ENCODE measurements at regions of chr17 and their contacts with region 1.

Region 1: DNA sequence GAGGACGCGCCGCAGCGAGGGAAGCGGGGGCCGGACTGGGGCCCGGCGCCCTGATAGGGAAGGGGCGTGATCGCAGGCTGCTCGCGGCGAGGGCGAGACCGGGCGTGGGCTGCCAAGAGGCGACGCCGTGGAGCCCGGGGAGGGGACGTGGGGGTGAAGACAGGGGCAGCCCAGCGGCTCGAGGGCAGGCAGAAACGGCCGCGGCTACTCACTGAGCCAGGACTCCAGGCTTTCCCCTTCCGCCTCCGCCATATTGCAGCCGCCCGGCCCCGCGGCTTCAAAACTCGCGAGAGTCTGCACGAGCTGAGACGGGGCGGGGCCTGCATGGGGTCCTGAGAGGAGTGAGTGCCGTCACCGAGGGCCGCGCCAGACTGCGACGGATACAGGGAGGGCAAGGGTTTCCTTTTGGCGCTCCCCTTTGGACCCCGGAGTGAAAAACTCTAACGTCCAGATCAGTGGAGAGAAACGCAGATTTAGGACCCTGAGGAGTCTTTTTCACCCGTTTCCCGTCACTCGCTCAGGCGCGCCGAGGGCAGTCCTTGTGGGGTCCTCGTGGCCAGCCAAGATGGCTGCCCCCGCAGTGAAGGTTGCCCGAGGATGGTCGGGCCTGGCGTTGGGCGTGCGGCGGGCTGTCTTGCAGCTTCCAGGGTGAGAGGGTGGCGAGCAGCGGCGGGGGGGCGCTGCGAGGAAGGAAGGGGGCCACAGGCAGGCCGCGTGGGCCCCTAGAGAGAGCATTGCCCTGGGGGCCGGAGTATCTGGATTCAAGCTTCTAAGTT is at the starts of genes GGA3 and MRPS7:
- DNase-seq: peak; percentile 94
- H3K4me3 Mint-ChIP-seq: peak within 1 kb of the TSS; percentile 96
- H3K27ac Mint-ChIP-seq: peak within 1 kb of the TSS; percentile 97
- H3K4me1 Mint-ChIP-seq: peaks cover 49% of the 10 kb centered on the region
- H3K27me3 Mint-ChIP-seq: no peaks in the 10 kb centered on the region
- total RNA-seq, gene GGA3: 93.4 and 94.3 TPM in 2 replicates
- total RNA-seq, gene MRPS7: 126 and 130 TPM in 2 replicates

Region 2: DNA sequence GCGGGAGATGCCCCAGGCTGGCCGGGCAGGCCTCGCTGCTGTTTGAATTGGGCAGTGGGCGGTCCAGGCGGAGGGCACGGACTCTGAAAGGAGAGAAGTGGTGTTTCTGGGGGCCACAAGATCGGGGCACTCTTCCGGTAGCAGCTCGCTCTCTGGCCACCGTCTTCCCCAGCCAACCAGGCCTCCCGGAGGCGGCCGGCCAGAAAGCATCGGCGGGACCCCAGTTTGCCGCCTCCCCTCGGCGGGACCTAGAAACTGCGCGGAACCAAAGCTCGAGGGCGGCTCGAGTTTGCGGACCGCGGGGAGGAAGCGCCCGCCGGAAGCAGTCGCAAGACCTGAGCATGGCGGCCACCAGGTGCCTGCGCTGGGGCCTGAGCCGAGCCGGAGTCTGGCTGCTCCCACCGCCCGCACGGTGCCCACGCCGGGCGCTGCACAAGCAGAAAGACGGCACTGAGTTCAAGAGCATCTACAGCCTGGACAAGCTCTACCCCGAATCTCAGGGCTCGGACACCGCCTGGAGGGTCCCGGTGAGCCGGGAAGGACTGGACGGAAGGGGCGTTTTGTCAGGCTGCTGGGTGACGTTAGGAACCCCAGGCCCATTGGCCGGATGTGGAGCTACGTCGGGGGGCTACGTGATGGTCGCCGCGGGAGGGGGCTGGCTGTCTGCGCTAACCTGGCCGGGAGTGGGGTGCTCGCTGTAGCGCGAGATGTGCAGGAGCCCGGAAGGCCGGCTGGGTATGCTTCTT is 249.0 kb before region 1 on chr17 and contains the start of gene MRPL58:
- intact Hi-C with region 1: loop called (anchors 1 kb)
- DNase-seq: peak; percentile 75
- H3K4me3 Mint-ChIP-seq: peak within 1 kb of the TSS; percentile 95
- H3K27ac Mint-ChIP-seq: peak within 1 kb of the TSS; percentile 88
- H3K4me1 Mint-ChIP-seq: peaks cover 17% of the 10 kb centered on the region
- H3K27me3 Mint-ChIP-seq: no peaks in the 10 kb centered on the region
- total RNA-seq, gene MRPL58: 77.8 and 78.1 TPM in 2 replicates

Region 3: GRCh38 chr17:75131280-75132017 is 130.1 kb before region 1 on chr17 and contains the start of gene NT5C:
- intact Hi-C with region 1: loop called (anchors 5 kb)
- DNase-seq: peak; percentile 70
- H3K4me3 Mint-ChIP-seq: peak within 1 kb of the TSS; percentile 92
- H3K27ac Mint-ChIP-seq: peak within 1 kb of the TSS; percentile 88
- H3K4me1 Mint-ChIP-seq: peaks cover 12% of the 10 kb centered on the region
- H3K27me3 Mint-ChIP-seq: no peaks in the 10 kb centered on the region
- total RNA-seq, gene NT5C: 80.0 and 80.1 TPM in 2 replicates

Region 4: GRCh38 chr17:75182569-75183450 is 78.7 kb before region 1 on chr17 and contains the start of gene SUMO2:
- intact Hi-C with region 1: loop called (anchors 2 kb)
- DNase-seq: peak; percentile 93
- H3K4me3 Mint-ChIP-seq: peak within 1 kb of the TSS; percentile 99
- H3K27ac Mint-ChIP-seq: peak within 1 kb of the TSS; percentile 98
- H3K4me1 Mint-ChIP-seq: peaks cover 38% of the 10 kb centered on the region
- H3K27me3 Mint-ChIP-seq: no peaks in the 10 kb centered on the region
- total RNA-seq, gene SUMO2: 649 and 656 TPM in 2 replicates

Region 5: GRCh38 chr17:75238684-75239191 is 22.8 kb before region 1 on chr17:
- intact Hi-C with region 1: loop called (anchors 1 kb)
- DNase-seq: peak; percentile 35
- H3K4me3 Mint-ChIP-seq: peak overlapping the region; percentile 38
- H3K27ac Mint-ChIP-seq: peak overlapping the region; percentile 76
- H3K4me1 Mint-ChIP-seq: peaks cover 35% of the 10 kb centered on the region
- H3K27me3 Mint-ChIP-seq: no peaks in the 10 kb centered on the region

Region 6: DNA sequence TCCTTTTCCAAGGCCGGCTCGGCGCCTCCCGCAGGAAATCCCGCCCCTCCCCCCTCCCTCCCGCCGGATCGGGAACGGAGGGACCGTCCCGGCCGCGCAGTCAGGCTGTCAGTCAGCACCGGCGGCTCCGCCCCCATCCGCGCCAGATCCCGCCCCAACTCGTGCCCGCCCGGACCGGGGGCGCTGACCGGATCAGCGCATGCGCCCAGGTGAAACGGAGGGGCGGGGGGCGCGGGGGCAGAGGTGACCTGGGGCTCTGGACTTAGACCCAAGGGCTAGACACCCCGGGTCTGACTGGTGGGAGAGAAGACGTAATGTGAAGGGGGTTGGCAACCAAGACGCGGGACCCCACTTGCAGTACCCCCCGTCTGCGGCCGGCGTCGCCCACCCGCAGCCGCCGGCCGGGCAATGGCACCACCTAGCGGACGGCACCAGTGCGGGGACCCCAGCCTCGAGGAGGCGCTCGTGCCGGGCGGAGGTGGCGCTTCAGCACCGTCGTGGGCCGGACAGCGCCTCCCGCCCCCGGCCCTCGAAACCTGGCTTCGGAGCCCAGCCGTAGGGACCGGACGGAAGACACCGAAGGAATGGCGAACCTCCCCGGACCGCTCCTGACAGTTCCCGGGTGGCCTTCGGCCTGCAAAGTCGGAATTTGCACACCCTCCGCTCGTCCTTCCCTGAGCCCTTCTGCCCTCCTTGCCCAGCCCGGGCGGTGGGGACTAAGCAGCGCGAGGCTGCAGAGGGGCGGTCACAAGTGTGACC is 254.2 kb after region 1 on chr17 and contains the start of gene CASKIN2:
- intact Hi-C with region 1: loop called (anchors 2 kb)
- DNase-seq: peak; percentile 62
- H3K4me3 Mint-ChIP-seq: peak within 1 kb of the TSS; percentile 78
- H3K27ac Mint-ChIP-seq: no peak within 1 kb of the TSS
- H3K4me1 Mint-ChIP-seq: peaks cover 18% of the 10 kb centered on the region
- H3K27me3 Mint-ChIP-seq: peaks cover 17% of the 10 kb centered on the region
- total RNA-seq, gene CASKIN2: 0.88 and 2.0 TPM in 2 replicates